Activated CD4-positive, alpha-beta T cell treated with anti-CD3 and anti-CD28 coated beads, Interleukin-2, amount 10 ng/mL, durations not matched to agents 7 days and 5 days (primary cell): ENCODE measurements at regions of chr3 and their contacts with region 1.

Region 1: DNA sequence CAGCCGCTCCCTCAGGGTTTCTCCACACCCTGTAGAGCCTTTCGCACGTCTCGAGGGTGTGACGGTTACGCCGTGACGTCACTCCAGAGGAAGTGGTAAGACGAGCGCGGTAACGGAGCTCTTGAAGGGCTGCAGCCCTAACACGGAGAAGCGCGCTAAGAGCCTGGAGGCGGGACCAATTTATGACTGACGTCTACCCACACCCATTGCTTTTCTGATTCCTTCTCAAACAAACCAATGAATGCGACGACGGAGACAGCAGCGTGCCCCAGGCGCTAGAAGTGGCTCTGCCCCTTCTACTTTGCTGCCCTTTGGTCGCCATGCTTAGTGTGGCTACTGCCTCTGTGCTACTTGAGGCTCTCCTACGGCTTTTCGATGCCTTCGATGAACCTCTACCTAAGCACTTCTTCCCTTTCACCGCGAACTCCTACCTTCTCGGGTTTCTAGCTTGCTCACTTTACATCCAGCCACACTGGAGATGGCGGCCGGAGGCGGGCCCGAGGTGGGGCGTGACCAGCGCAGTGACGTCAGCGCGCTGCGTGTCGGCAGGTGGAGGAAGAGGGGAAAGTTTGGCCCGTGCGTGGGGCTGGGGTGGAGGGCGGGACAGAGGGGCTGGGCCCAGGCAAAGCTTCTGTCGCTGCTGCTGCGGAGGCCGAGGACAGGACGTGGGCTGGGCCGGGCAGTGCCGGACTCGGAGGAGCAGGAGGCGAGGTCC is at the start of gene OXSR1:
- DNase-seq: peak; percentile 99
- H3K4me3 Mint-ChIP-seq: peak within 1 kb of the TSS; percentile 95
- H3K27ac Mint-ChIP-seq: peak within 1 kb of the TSS; percentile 100
- H3K4me1 Mint-ChIP-seq: peaks cover 55% of the 10 kb centered on the region
- H3K27me3 Mint-ChIP-seq: no peaks in the 10 kb centered on the region
- total RNA-seq, gene OXSR1: 52.4 to 57.3 TPM

Region 2: GRCh38 chr3:37833302-37834186 is 331.6 kb before region 1 on chr3:
- CTCF ChIA-PET with region 1: no interaction called
- POLR2A ChIA-PET with region 1: no interaction called
- DNase-seq: no peak
- H3K4me3 Mint-ChIP-seq: no peak overlapping the region
- H3K27ac Mint-ChIP-seq: no peak overlapping the region
- H3K4me1 Mint-ChIP-seq: no peaks in the 10 kb centered on the region
- H3K27me3 Mint-ChIP-seq: peaks cover 2% of the 10 kb centered on the region

Region 3: DNA sequence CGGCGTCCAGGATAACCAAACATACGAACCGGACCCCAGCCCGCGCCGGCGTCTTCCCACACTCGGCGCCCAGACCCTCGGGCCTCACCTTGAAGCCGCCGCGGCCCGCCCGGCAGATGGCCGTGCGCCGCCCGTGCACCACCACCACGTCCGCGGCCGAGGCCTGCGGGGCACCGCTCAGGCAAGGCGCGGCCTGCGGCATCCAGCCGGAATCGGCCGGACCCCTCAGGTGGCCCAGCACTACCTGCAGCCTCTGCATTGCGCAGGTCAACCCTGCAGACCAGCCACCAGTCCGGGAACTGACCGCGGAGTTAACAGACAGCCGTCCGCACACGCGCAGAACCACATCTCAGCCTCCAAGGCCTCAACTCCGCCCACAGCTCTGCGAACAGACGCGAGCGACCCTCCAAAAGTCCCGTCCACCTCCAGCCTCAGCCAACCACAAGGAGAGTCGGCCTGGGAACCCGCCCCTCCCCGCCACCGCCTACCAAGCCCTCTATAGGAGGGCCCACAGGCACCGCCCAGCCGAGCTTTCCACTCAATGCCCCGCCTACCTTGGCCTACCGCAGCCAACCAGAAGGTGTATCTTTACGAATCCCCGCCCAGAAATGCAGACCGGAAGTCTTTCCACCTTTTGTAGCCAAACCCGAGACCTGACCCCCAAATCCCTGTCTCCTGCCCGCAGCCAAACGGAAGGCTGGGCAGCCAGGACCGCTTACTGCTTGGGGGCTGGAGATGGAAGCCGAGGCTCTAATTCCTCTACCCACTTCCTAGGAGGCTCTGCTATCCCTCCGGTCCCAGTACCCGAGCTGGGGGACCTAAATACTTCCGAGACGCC is 28.1 kb before region 1 on chr3 and contains the start of gene ACAA1:
- CTCF ChIA-PET with region 1: interaction called, 8 read pairs
- POLR2A ChIA-PET with region 1: interaction called, 17 read pairs
- DNase-seq: peak; percentile 99
- H3K4me3 Mint-ChIP-seq: peak within 1 kb of the TSS; percentile 84
- H3K27ac Mint-ChIP-seq: peak within 1 kb of the TSS; percentile 99
- H3K4me1 Mint-ChIP-seq: peaks cover 68% of the 10 kb centered on the region
- H3K27me3 Mint-ChIP-seq: no peaks in the 10 kb centered on the region
- total RNA-seq, gene ACAA1: 93.8 to 114 TPM

Region 4: GRCh38 chr3:38154033-38154494 is 11.1 kb before region 1 on chr3:
- CTCF ChIA-PET with region 1: interaction called, 23 read pairs
- POLR2A ChIA-PET with region 1: interaction called, 3 read pairs
- DNase-seq: no peak
- H3K4me3 Mint-ChIP-seq: no peak overlapping the region
- H3K27ac Mint-ChIP-seq: no peak overlapping the region
- H3K4me1 Mint-ChIP-seq: peaks cover 37% of the 10 kb centered on the region
- H3K27me3 Mint-ChIP-seq: no peaks in the 10 kb centered on the region

Region 5: DNA sequence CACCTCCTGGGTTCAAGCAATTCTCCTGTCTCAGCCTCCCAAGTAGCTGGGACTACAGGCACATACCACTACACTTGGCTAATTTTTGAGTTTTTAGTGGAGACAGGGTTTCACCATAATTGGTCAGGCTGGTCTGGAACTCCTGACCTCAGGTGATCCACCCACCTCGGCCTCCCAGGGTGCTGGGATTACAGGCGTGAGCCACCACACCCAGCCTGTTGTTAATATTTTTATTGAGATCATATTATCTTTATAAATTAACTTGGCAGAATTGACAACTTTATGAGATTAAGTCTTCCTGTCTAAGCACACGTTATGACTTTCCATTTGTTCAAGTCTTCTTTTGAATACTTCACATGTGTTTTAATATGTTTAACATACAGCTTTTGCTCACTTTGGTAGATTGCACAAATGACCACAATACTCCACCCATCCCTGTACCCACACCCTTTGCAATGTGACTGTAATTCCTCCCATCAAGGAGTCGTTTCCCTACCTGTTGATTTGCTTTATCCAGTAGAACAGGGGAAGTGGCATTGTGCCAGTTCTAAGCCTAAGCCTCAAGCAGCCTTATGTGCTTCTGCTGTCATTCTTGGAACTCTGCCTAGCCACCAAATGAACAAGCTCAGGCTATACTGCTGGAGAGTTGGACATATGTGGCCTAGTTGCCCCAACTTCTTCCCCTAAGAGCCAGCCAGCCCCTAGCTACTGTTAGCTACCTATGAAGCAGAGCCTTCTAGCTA is 189.6 kb after region 1 on chr3:
- CTCF ChIA-PET with region 1: no interaction called
- POLR2A ChIA-PET with region 1: no interaction called
- DNase-seq: no peak
- H3K4me3 Mint-ChIP-seq: no peak overlapping the region
- H3K27ac Mint-ChIP-seq: no peak overlapping the region
- H3K4me1 Mint-ChIP-seq: peaks cover 5% of the 10 kb centered on the region
- H3K27me3 Mint-ChIP-seq: no peaks in the 10 kb centered on the region